Natural killer cell (primary cell): ENCODE measurements at regions of chr20 and their contacts with region 1.

Region 1: DNA sequence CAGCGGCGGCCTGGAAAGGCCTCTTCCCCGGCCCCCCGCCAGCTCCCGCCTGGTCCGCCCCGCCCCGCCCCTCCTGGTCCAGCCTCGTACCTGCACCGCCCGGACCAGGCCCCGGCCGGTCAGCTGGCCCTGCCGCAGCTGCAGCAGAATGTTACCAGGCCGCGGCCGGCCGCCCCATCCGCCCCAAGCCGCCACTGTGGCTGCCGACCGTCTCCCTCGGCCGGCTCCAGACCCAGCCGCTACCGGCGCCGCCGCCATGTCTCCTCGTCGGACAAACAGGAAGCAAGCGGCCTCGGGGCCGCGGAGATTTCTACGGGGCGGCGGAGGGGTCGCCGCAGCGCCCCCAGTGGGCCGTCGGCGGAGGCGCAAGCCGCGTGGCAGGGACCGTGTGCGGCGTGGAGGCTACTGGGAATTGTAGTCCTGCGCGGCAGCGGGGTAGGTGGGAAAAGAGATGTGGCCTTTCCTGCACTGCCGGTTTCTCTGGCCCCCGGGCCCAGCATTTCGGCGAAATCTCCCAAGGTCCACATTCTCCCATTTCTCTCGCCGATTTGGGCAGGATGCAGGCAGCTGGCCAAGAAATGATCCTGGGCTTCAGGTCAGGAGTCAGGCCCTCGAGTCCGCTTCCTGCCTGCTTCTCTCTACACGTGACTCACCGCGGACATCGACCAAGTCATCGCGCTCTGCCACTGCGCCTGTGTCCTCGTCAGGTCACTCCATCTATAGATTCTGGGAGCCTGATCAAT is at the start of gene TRPC4AP:
- DNase-seq: peak; percentile 87 to 95
- ATAC-seq: peak; percentile 94 to 99 (median 96)
- H3K4me3 ChIP-seq: peak within 1 kb of the TSS; percentile 95
- H3K4me3 Mint-ChIP-seq: peak within 1 kb of the TSS; percentile 96
- H3K27ac ChIP-seq: peak within 1 kb of the TSS; percentile 75
- H3K27ac Mint-ChIP-seq: peak within 1 kb of the TSS; percentile 82 to 89
- H3K4me1 ChIP-seq: peaks cover 24% of the 10 kb centered on the region
- H3K4me1 Mint-ChIP-seq: peaks cover 37 to 41% of the 10 kb centered on the region in 2 donors
- H3K27me3 ChIP-seq: no peaks in the 10 kb centered on the region
- H3K27me3 Mint-ChIP-seq: no peaks in the 10 kb centered on the region
- CTCF ChIP-seq: peak; percentile 95
- total RNA-seq, gene TRPC4AP: 72.3 to 79.0 (median 74.4) TPM

Region 2: DNA sequence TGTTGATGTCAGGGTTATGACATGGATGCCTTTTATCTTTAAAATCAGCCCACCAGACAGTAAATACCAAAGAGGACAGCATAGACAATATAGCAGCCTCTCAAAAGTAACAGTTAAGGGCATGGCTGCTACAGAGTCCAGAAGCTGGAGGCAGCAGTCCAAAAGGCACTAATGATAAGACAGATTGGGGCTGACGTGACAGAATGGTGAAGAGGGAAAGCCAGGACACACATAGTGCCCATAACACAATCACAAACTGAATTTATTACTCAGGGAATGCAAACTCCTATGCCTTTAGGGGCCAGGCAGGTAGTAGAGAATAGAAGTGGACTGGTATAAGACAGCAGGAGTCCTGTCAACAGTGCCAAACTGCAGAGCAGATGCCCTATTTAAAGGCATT is 347.8 kb before region 1 on chr20:
- intact Hi-C with region 1: no loop called
- DNase-seq: no peak
- ATAC-seq: no peak
- H3K4me3 ChIP-seq: no peak overlapping the region
- H3K4me3 Mint-ChIP-seq: no peak overlapping the region
- H3K27ac ChIP-seq: no peak overlapping the region
- H3K27ac Mint-ChIP-seq: no peak overlapping the region
- H3K4me1 ChIP-seq: no peaks in the 10 kb centered on the region
- H3K4me1 Mint-ChIP-seq: peaks cover 8 to 13% of the 10 kb centered on the region in 2 donors
- H3K27me3 ChIP-seq: no peaks in the 10 kb centered on the region
- H3K27me3 Mint-ChIP-seq: no peaks in the 10 kb centered on the region
- CTCF ChIP-seq: no peak

Region 3: DNA sequence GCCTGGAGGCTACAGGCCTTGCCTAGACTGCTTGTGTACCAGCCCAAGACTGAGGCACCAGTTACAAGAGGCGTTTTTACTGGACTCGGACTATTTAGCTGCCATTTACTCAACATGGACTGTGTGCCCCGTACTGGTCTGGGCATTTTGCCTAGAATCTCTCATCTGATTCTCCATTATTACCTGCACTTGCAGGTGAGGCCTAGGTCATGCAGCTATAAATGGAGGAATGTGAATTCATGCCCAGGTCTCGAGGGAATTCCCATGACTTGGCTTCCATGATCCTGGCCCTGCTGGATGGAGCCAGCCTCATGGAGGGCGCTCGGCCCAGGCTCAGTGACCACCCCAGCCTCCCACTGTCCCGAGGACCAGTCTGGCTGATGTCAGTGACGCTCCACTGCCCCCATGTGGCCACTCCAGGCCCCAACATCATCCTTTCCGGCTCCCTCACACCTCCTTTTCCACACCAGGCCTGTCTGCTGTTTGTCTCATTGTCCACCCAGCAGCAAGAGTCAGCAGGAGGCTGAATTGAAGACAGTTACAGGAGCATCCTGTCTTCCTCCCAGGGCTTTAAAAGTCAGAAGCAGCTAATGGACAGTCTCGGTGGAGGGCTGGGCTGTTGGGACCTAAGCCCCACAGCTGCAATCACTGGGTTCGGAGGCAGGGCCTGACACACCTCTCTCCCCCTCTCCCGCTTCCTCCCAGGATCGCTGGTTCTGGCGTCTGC is 176.5 kb after region 1 on chr20:
- intact Hi-C with region 1: loop called (anchors 1 kb)
- DNase-seq: peak; percentile 48 to 73
- ATAC-seq: peak; percentile 64 to 87 (median 83)
- H3K4me3 ChIP-seq: no peak overlapping the region
- H3K4me3 Mint-ChIP-seq: no peak overlapping the region
- H3K27ac ChIP-seq: no peak overlapping the region
- H3K27ac Mint-ChIP-seq: no peak overlapping the region
- H3K4me1 ChIP-seq: no peaks in the 10 kb centered on the region
- H3K4me1 Mint-ChIP-seq: peaks cover 4 to 6% of the 10 kb centered on the region in 2 donors
- H3K27me3 ChIP-seq: no peaks in the 10 kb centered on the region
- H3K27me3 Mint-ChIP-seq: no peaks in the 10 kb centered on the region
- CTCF ChIP-seq: peak; percentile 68